ENCODE measurements at regions of chr14 and their contacts with region 1.

Region 1: GRCh38 chr14:64952598-64953309 is 10.2 kb upstream of the GPX2 start:
- DNase-seq: peak; percentile 32
- ATAC-seq: peak; percentile 87
- H3K4me3 ChIP-seq: no peak overlapping the region
- H3K27ac ChIP-seq: peak overlapping the region; percentile 41
- H3K4me1 ChIP-seq: peaks cover 19% of the 10 kb centered on the region
- H3K27me3 ChIP-seq: no peaks in the 10 kb centered on the region
- CTCF ChIP-seq: peak; percentile 15 to 25 (median 22); a peak in 4 of 6 replicates
- EP300 ChIP-seq: no peak
- POLR2A ChIP-seq: no peak
- RAD21 ChIP-seq: peak; percentile 35; the same call in 1 of the 2 replicates

Region 2: DNA sequence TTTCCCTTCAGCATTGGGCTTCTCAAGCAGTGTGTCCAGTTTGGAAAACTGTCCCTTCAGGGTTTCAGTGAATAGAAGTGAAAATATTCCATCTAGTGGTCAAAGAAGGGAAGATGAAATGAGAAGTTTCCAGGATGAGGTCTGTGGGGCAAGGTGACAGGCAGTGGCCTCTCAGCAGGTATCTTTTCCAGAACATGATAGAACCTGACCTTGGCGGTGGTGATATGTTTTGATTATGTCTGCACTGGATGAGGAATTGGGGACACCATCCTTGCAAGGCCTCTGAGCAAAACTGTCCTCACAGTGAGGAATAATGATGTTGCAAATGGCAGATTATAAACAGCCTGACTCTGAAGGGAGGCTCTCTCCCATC is 14.9 kb before region 1 on chr14:
- CTCF ChIA-PET with region 1: interaction called, 12 read pairs
- POLR2A ChIA-PET with region 1: interaction called, 6 read pairs
- RAD21 ChIA-PET with region 1: no interaction called
- SMC1A ChIA-PET with region 1: interaction called, 13 read pairs
- in situ Hi-C with region 1: no loop called
- intact Hi-C with region 1: no loop called
- DNase-seq: no peak
- ATAC-seq: peak; percentile 20; the same call in 2 of the 3 replicates
- H3K4me3 ChIP-seq: no peak overlapping the region
- H3K27ac ChIP-seq: no peak overlapping the region
- H3K4me1 ChIP-seq: no peaks in the 10 kb centered on the region
- H3K27me3 ChIP-seq: no peaks in the 10 kb centered on the region
- CTCF ChIP-seq: peak in 2 of 3 experiments; percentile 8 to 19; a peak in 3 of 6 replicates
- EP300 ChIP-seq: no peak
- POLR2A ChIP-seq: no peak
- RAD21 ChIP-seq: peak; percentile 19; the same call in 1 of the 2 replicates

Region 3: GRCh38 chr14:64965356-64966000 is 12.7 kb after region 1 on chr14:
- CTCF ChIA-PET with region 1: interaction called, 10 read pairs
- POLR2A ChIA-PET with region 1: no interaction called
- RAD21 ChIA-PET with region 1: interaction called, 3 read pairs
- SMC1A ChIA-PET with region 1: interaction called, 9 read pairs
- in situ Hi-C with region 1: no loop called
- intact Hi-C with region 1: no loop called
- DNase-seq: no peak
- ATAC-seq: peak; percentile 32; the same call in 1 of the 3 replicates
- H3K4me3 ChIP-seq: no peak overlapping the region
- H3K27ac ChIP-seq: no peak overlapping the region
- H3K4me1 ChIP-seq: no peaks in the 10 kb centered on the region
- H3K27me3 ChIP-seq: no peaks in the 10 kb centered on the region
- CTCF ChIP-seq: no peak
- EP300 ChIP-seq: no peak
- POLR2A ChIP-seq: no peak
- RAD21 ChIP-seq: no peak

Region 4: DNA sequence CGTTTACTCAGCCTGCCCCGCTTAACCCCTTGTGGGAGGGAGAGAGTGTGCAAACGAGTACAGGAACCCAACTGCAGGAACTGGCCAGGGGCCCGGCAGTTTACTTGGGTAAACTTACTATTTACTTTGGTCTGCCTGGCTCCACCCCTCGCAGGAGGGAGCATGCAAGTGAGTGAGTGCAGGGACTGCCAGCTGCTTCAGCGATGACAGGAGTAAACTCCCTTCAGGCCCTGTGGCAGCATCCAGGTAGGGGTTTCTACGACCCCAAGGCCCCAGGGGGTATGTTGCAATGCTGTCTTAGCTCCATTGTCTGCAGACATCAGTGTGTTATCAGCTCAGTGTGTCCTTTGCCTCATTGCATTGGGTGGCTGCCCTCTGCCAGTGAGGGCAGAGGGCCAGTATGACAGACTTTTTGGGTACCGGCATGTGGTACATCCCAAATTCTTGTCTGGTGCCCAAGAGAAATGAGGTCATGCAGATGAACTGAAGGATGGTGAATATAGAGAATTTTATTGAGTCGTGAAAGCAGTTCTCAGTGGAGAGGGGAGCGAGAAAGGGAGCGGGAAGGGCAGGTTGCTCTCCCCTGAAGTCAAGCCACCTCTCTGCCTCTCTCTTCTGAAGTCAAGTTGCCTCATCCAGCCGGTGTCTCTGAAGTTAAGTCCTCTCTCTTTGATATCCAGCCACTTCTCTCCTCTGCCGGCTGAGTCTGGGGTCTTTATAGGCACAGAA is 641.6 kb after region 1 on chr14:
- CTCF ChIA-PET with region 1: no interaction called
- POLR2A ChIA-PET with region 1: no interaction called
- RAD21 ChIA-PET with region 1: no interaction called
- SMC1A ChIA-PET with region 1: no interaction called
- in situ Hi-C with region 1: no loop called
- intact Hi-C with region 1: no loop called
- DNase-seq: no peak
- ATAC-seq: no peak
- H3K4me3 ChIP-seq: no peak overlapping the region
- H3K27ac ChIP-seq: no peak overlapping the region
- H3K4me1 ChIP-seq: no peaks in the 10 kb centered on the region
- H3K27me3 ChIP-seq: no peaks in the 10 kb centered on the region
- CTCF ChIP-seq: no peak
- EP300 ChIP-seq: no peak
- POLR2A ChIP-seq: no peak
- RAD21 ChIP-seq: no peak

Measured in GM12878 (cell line).